HEK293T (cell line): ENCODE measurements at regions of chr1 and their contacts with region 1.

Region 1: GRCh38 chr1:237864338-237865244 is 26.1 kb downstream of the ZP4 start:
- DNase-seq: peak; percentile 79

Region 2: GRCh38 chr1:237851210-237851845 is 13.3 kb before region 1 on chr1:
- CTCF ChIA-PET with region 1: interaction called, 34 read pairs
- POLR2A ChIA-PET with region 1: no interaction called
- DNase-seq: peak; percentile 73

Region 3: GRCh38 chr1:237938553-237938952 is 74.0 kb after region 1 on chr1:
- CTCF ChIA-PET with region 1: interaction called, 47 read pairs
- POLR2A ChIA-PET with region 1: no interaction called
- DNase-seq: peak; percentile 56